HEK293 (cell line): ENCODE measurements at regions of chr2 and their contacts with region 1.

Region 1: DNA sequence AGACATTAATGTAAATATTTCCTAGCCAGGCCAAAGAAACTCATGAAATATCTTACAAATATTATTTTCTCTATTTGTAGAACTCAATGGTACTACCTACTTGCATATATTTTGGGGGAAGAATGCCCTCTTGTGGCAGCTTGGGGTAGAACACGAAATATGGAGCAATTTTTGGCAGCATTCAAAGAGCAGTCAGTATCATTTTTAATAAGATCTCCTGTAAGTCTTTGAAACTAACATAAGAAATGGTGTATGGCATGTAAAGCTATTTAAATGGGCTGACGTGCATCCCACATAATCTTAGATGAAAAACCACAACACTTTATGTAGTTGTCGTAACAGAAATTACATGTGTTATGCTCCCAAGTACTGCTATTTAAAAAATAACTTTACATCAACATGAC is 62.3 kb upstream of the CCDC195 start:
- H3K4me3 ChIP-seq: no peak overlapping the region
- H3K27ac ChIP-seq: no peak overlapping the region
- H3K4me1 ChIP-seq: no peaks in the 10 kb centered on the region
- CTCF ChIP-seq: peak; percentile 35; the same call in 1 of the 2 replicates

Region 2: GRCh38 chr2:224802407-224802806 is 23.9 kb after region 1 on chr2:
- CTCF ChIA-PET with region 1: no interaction called
- POLR2A ChIA-PET with region 1: no interaction called
- H3K4me3 ChIP-seq: no peak overlapping the region
- H3K27ac ChIP-seq: no peak overlapping the region
- H3K4me1 ChIP-seq: no peaks in the 10 kb centered on the region
- CTCF ChIP-seq: no peak

Region 3: GRCh38 chr2:225002039-225002655 is 223.7 kb after region 1 on chr2:
- CTCF ChIA-PET with region 1: interaction called, 10 read pairs
- POLR2A ChIA-PET with region 1: no interaction called
- H3K4me3 ChIP-seq: no peak overlapping the region
- H3K27ac ChIP-seq: no peak overlapping the region
- H3K4me1 ChIP-seq: no peaks in the 10 kb centered on the region
- CTCF ChIP-seq: peak; percentile 58